ENCODE measurements at regions of chr14 and their contacts with region 1.

Region 1: DNA sequence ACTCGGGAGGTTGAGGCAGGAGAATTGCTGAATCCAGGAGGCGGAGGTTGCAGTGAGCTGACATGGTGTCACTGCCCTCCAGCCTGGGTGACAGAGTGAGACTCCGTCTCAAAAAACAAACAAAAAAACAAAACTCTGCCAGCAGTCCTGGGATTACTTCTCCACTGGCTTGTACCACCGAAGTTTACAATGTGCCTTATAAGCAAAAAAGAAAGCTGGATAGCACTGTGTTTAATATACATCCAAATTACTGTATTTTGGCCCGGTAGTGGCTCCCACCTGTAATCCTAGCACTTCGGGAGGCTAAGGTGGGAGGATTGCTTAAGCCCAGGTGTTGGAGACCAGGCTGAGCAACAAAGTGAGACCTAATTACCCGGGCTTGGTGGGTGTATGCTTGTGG is 16.7 kb downstream of the HOMEZ start:
- DNase-seq: no peak
- H3K4me3 ChIP-seq: no peak overlapping the region
- H3K27ac ChIP-seq: no peak overlapping the region
- H3K4me1 ChIP-seq: no peaks in the 10 kb centered on the region
- H3K27me3 ChIP-seq: no peaks in the 10 kb centered on the region
- CTCF ChIP-seq: no peak

Region 2: DNA sequence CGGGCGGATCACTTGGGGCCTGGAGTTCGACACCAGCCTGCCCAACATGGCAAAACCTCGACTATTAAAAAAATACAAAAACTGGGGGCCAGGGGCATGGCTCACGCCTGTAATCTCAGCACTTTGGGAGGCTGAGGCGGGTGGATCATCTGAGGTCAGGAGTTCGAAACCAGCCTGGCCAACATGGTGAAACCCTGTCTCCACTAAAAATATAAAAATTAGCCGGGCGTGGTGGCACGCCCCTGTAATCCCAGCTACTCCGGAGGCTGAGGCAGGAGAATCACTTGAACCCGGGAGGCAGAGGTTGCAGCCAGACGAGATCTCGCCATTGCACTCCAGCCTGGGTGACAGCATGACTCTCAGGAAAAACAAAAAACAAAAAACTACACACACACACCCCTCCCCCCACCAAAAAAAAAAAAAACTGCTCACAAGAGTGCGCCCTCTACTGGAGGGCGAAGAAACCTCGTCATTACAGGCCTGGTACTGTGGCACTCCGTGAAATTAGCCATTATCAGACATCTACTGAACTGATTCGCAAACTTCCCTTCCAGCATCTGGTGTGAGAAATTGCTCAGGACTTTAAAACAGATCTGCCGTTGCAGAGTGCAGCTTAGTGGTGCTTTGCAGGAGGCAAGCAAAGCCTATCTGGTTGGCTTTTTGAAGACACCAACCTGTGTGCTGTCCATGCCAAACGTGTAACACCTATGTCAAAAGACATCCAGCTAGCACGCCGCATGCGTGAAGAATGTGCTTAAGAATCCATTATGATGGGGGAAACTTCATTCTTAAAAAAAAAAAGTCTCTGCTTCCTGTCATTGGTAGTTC is 25.8 kb after region 1 on chr14:
- CTCF ChIA-PET with region 1: interaction called, 18 read pairs
- dilution Hi-C with region 1: no loop called
- in situ Hi-C with region 1: no loop called
- intact Hi-C with region 1: loop called (anchors 1 kb)
- DNase-seq: no peak
- H3K4me3 ChIP-seq: no peak overlapping the region
- H3K27ac ChIP-seq: no peak overlapping the region
- H3K4me1 ChIP-seq: peaks cover 18% of the 10 kb centered on the region
- H3K27me3 ChIP-seq: no peaks in the 10 kb centered on the region
- CTCF ChIP-seq: peak; percentile 75 to 94

Region 3: DNA sequence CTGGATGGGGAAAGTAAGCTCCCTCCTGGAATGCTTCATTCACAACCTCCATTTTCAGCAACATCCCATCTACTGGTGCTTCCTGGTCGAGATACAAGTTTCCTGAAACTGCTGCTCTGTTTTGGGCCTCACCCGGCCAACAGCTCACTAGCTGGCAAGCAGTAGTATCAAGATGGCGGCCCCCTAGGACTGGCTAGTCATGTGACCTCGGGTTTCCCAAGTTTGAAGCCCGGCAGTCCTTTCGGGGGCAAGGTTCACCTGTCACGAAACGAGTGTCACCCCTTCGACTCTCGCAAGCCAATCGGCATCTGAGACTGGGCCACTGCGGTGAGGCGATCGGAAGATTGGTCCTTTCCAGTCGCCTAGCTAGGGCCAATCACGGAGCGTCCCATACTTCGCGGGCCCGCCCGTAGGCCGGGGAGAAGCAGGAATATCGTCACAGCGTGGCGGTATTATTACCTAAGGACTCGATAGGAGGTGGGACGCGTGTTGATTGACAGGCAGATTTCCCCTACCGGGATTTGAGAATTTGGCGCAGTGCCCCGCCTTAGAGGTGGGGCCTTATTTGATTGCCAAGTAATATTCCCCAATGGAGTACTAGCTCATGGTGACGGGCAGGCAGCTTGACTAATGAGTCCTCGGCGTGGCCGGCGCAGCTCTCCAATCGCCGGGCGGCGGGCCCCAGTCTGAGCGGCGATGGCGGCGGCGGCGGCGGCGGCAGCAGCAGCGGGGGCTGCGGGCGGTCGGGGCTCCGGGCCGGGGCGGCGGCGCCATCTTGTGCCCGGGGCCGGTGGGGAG is 51.8 kb after region 1 on chr14 and contains the start of gene PABPN1:
- CTCF ChIA-PET with region 1: no interaction called
- dilution Hi-C with region 1: no loop called
- in situ Hi-C with region 1: no loop called
- intact Hi-C with region 1: loop called (anchors 1 kb)
- DNase-seq: peak; percentile 100
- H3K4me3 ChIP-seq: peak within 1 kb of the TSS; percentile 86 to 95 (median 91)
- H3K27ac ChIP-seq: peak within 1 kb of the TSS; percentile 92
- H3K4me1 ChIP-seq: peaks cover 19% of the 10 kb centered on the region
- H3K27me3 ChIP-seq: no peaks in the 10 kb centered on the region
- CTCF ChIP-seq: no peak
- total RNA-seq, gene PABPN1: 43.0 to 148 TPM

Region 4: GRCh38 chr14:23366426-23366921 is 97.3 kb after region 1 on chr14:
- CTCF ChIA-PET with region 1: no interaction called
- dilution Hi-C with region 1: loop called (anchors 5 kb)
- in situ Hi-C with region 1: loop called in 1 of 2 experiments (anchors 10 kb)
- intact Hi-C with region 1: no loop called
- DNase-seq: peak; percentile 60
- H3K4me3 ChIP-seq: peak overlapping the region in 2 of 3 experiments; percentile 12 to 34
- H3K27ac ChIP-seq: no peak overlapping the region
- H3K4me1 ChIP-seq: peaks cover 22% of the 10 kb centered on the region
- H3K27me3 ChIP-seq: peaks cover 7% of the 10 kb centered on the region
- CTCF ChIP-seq: no peak

Region 5: GRCh38 chr14:23469127-23469905 is 200.1 kb after region 1 on chr14 and contains the start of gene NGDN:
- CTCF ChIA-PET with region 1: no interaction called
- dilution Hi-C with region 1: no loop called
- in situ Hi-C with region 1: no loop called
- intact Hi-C with region 1: loop called (anchors 5 kb)
- DNase-seq: peak; percentile 100
- H3K4me3 ChIP-seq: peak within 1 kb of the TSS; percentile 65 to 93 (median 90)
- H3K27ac ChIP-seq: peak within 1 kb of the TSS; percentile 87
- H3K4me1 ChIP-seq: peaks cover 10% of the 10 kb centered on the region
- H3K27me3 ChIP-seq: no peaks in the 10 kb centered on the region
- CTCF ChIP-seq: peak; percentile 76 to 85
- total RNA-seq, gene NGDN: 27.0 to 34.5 TPM